Colonic mucosa (tissue), 4 donors: ENCODE measurements at regions of chr19 and their contacts with region 1.

Region 1: GRCh38 chr19:39550197-39550596 is 10.2 kb upstream of the EID2 start:
- DNase-seq: no peak
- H3K4me3 ChIP-seq: no peak overlapping the region
- H3K27ac ChIP-seq: no peak overlapping the region
- H3K4me1 ChIP-seq: no peaks in the 10 kb centered on the region
- H3K27me3 ChIP-seq: no peaks in the 10 kb centered on the region
- CTCF ChIP-seq: no peak

Region 2: DNA sequence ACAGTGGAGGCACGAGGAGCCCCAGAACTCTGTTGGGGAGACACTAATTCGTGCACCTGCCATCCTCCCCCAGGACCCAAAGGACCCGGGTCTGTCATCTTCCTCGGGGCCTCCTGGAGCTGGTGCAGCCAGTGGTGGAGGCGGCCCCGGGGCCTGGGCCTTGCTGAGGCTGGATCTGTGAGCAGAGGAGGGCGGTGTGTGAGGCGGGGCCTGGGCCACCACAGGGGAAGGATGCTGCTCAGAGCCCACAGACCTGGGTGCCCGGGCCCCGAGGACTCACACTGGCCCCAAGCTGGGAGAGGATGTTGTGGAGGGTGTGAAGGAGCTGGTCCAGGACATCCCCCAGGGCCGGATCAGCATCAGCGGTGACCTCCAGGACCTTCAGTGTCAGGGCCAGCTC is 313.7 kb before region 1 on chr19:
- intact Hi-C with region 1: no loop called
- DNase-seq: no peak
- H3K4me3 ChIP-seq: no peak overlapping the region
- H3K27ac ChIP-seq: no peak overlapping the region
- H3K4me1 ChIP-seq: no peaks in the 10 kb centered on the region
- H3K27me3 ChIP-seq: no peaks in the 10 kb centered on the region
- CTCF ChIP-seq: no peak

Region 3: DNA sequence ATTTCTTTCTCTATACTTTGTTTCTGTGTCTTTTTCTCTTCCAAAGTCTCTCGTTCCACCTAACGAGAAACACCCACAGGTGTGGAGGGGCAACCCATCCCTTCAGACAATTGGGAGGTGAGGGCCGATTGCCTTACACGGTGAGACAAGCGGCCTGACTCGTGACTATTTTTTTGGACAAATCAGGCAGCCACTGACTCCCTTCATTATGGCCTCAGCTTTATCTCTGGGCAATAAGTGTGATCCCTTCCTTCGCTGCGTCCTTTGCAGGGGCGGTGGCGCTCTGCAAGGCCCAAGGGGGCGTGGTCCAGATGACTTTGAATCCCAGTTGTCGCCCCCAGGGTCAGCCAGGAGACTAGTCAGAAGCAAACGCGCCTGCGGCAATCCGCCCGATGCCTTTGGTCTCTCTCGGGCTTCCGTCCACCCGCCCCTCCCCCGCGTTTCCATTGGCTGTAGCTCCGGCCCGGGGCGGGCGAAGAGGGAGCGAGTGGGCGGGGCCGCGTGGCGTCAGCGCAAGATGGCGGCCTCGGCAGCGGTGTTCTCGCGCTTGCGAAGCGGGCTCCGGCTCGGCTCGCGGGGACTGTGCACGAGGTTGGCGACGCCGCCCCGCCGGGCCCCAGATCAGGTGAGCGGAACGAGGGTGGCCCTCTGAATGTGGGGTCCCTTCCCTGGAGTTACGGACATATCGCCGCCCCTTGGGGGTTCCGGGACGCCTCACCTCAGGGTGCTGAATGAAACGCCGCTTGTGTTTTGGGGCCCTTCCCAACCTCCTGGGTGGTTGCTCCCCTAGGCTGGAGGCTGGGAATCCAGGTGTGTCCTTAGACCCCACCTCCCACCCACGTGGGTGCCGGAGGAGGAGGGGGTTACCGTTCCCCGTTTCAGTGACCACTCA is 69.6 kb before region 1 on chr19 and contains the start of gene TIMM50:
- intact Hi-C with region 1: no loop called
- DNase-seq: peak; percentile 98
- H3K4me3 ChIP-seq: peak within 1 kb of the TSS; percentile 87
- H3K27ac ChIP-seq: peak within 1 kb of the TSS; percentile 60
- H3K4me1 ChIP-seq: no peaks in the 10 kb centered on the region
- H3K27me3 ChIP-seq: no peaks in the 10 kb centered on the region
- CTCF ChIP-seq: no peak
- total RNA-seq, gene TIMM50: 45.7 to 83.9 TPM

Region 4: GRCh38 chr19:39576511-39576910 is 26.3 kb after region 1 on chr19:
- intact Hi-C with region 1: no loop called
- DNase-seq: no peak
- H3K4me3 ChIP-seq: no peak overlapping the region
- H3K27ac ChIP-seq: no peak overlapping the region
- H3K4me1 ChIP-seq: no peaks in the 10 kb centered on the region
- H3K27me3 ChIP-seq: no peaks in the 10 kb centered on the region
- CTCF ChIP-seq: no peak

Region 5: GRCh38 chr19:39671738-39672363 is 121.7 kb after region 1 on chr19:
- intact Hi-C with region 1: loop called (anchors 2 kb)
- DNase-seq: peak; percentile 33
- H3K4me3 ChIP-seq: no peak overlapping the region
- H3K27ac ChIP-seq: no peak overlapping the region
- H3K4me1 ChIP-seq: no peaks in the 10 kb centered on the region
- H3K27me3 ChIP-seq: no peaks in the 10 kb centered on the region
- CTCF ChIP-seq: peak; percentile 45